GM12878 (cell line): ENCODE measurements at regions of chr17 and their contacts with region 1.

Region 1: DNA sequence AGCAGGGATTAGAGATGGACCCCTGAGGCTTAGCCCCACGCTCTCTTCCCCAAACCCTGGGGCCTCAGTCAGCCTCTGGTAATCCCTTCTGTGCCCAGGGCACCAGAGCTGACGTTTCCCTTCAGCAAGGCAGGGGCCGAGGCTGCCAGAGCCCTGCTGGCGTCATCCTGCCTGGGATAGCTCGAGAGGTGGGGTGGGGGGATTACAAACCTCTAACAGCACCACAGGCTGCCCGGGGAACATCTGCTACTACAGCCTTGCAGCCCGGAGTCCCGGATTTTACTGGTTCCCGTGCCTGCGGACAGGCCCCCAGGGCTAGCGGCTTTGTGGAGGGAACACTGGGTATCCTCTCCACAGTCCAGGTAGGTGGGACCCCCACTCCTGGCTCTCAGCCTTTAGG is at the start of gene AANAT:
- DNase-seq: no peak
- ATAC-seq: no peak
- H3K4me3 ChIP-seq: no peak within 1 kb of the TSS
- H3K27ac ChIP-seq: no peak within 1 kb of the TSS
- H3K4me1 ChIP-seq: peaks cover 6% of the 10 kb centered on the region
- H3K27me3 ChIP-seq: no peaks in the 10 kb centered on the region
- CTCF ChIP-seq: no peak
- EP300 ChIP-seq: no peak
- POLR2A ChIP-seq: no peak
- RAD21 ChIP-seq: no peak
- polyA plus RNA-seq, gene AANAT: not detected

Region 2: GRCh38 chr17:76481071-76481655 is 13.8 kb after region 1 on chr17:
- CTCF ChIA-PET with region 1: interaction called, 18 read pairs
- POLR2A ChIA-PET with region 1: no interaction called
- RAD21 ChIA-PET with region 1: interaction called, 6 read pairs
- SMC1A ChIA-PET with region 1: interaction called, 4 read pairs
- in situ Hi-C with region 1: no loop called
- intact Hi-C with region 1: no loop called
- DNase-seq: peak; percentile 71
- ATAC-seq: peak; percentile 82
- H3K4me3 ChIP-seq: peak overlapping the region; percentile 66
- H3K27ac ChIP-seq: peak overlapping the region; percentile 99
- H3K4me1 ChIP-seq: peaks cover 53% of the 10 kb centered on the region
- H3K27me3 ChIP-seq: no peaks in the 10 kb centered on the region
- CTCF ChIP-seq: no peak
- EP300 ChIP-seq: peak; percentile 69 to 74
- POLR2A ChIP-seq: peak; percentile 67
- RAD21 ChIP-seq: no peak

Region 3: DNA sequence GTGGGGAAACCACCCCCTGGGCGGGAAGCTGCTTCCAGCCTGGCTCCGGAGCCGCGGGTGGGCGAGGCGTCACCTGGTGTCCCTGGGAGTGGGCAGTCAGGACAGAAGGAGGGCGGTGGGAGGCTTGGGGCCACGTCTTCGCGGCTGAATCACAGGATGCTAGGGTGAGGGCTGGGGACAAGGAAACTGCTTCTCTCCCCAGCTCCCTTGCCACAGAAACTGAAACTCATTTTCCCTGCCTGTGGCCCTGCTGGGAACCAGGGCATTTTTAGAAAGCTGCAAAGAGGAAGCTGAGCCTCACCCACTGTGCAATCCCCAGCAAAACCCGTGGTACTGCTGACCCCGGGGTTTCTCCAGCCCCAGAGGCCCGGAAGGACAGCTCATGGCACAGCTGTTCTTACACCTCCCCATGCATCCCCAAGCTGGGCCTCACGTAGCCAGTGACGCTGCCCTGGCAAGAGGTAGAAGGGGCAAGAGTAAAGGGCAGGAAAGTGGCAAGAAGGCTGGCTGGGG is 25.7 kb after region 1 on chr17:
- CTCF ChIA-PET with region 1: interaction called, 15 read pairs
- POLR2A ChIA-PET with region 1: no interaction called
- RAD21 ChIA-PET with region 1: interaction called, 19 read pairs
- SMC1A ChIA-PET with region 1: interaction called, 19 read pairs
- in situ Hi-C with region 1: no loop called
- intact Hi-C with region 1: no loop called
- DNase-seq: peak; percentile 80
- ATAC-seq: peak; percentile 79
- H3K4me3 ChIP-seq: peak overlapping the region; percentile 47; the same call in 1 of the 2 replicates
- H3K27ac ChIP-seq: peak overlapping the region; percentile 80
- H3K4me1 ChIP-seq: peaks cover 67% of the 10 kb centered on the region
- H3K27me3 ChIP-seq: no peaks in the 10 kb centered on the region
- CTCF ChIP-seq: no peak
- EP300 ChIP-seq: no peak; a peak in 1 of 4 replicates
- POLR2A ChIP-seq: peak; percentile 7; the same call in 1 of the 2 replicates
- RAD21 ChIP-seq: no peak

Region 4: GRCh38 chr17:76501018-76501826 is 33.9 kb after region 1 on chr17 and contains the start of gene RHBDF2:
- CTCF ChIA-PET with region 1: interaction called, 186 read pairs
- POLR2A ChIA-PET with region 1: interaction called, 9 read pairs
- RAD21 ChIA-PET with region 1: interaction called, 37 read pairs
- SMC1A ChIA-PET with region 1: interaction called, 35 read pairs
- in situ Hi-C with region 1: loop called (anchors 5 kb)
- intact Hi-C with region 1: loop called (anchors 1 kb)
- DNase-seq: peak; percentile 62
- ATAC-seq: peak; percentile 83
- H3K4me3 ChIP-seq: peak within 1 kb of the TSS; percentile 96
- H3K27ac ChIP-seq: peak within 1 kb of the TSS; percentile 86
- H3K4me1 ChIP-seq: peaks cover 41% of the 10 kb centered on the region
- H3K27me3 ChIP-seq: no peaks in the 10 kb centered on the region
- CTCF ChIP-seq: no peak
- EP300 ChIP-seq: no peak
- POLR2A ChIP-seq: peak; percentile 85
- RAD21 ChIP-seq: no peak
- polyA plus RNA-seq, gene RHBDF2: 0.97 to 1.1 TPM

Region 5: GRCh38 chr17:76506408-76507349 is 39.3 kb after region 1 on chr17:
- CTCF ChIA-PET with region 1: interaction called, 186 read pairs
- POLR2A ChIA-PET with region 1: interaction called, 5 read pairs
- RAD21 ChIA-PET with region 1: interaction called, 37 read pairs
- SMC1A ChIA-PET with region 1: interaction called, 35 read pairs
- in situ Hi-C with region 1: loop called (anchors 5 kb)
- intact Hi-C with region 1: loop called (anchors 1 kb)
- DNase-seq: peak; percentile 40
- ATAC-seq: peak; percentile 92
- H3K4me3 ChIP-seq: no peak overlapping the region
- H3K27ac ChIP-seq: no peak overlapping the region
- H3K4me1 ChIP-seq: peaks cover 9% of the 10 kb centered on the region
- H3K27me3 ChIP-seq: no peaks in the 10 kb centered on the region; a peak in 1 of 4 replicates
- CTCF ChIP-seq: peak; percentile 89 to 99 (median 92); a peak in 5 of 6 replicates
- EP300 ChIP-seq: no peak
- POLR2A ChIP-seq: no peak
- RAD21 ChIP-seq: peak; percentile 97

Region 6: DNA sequence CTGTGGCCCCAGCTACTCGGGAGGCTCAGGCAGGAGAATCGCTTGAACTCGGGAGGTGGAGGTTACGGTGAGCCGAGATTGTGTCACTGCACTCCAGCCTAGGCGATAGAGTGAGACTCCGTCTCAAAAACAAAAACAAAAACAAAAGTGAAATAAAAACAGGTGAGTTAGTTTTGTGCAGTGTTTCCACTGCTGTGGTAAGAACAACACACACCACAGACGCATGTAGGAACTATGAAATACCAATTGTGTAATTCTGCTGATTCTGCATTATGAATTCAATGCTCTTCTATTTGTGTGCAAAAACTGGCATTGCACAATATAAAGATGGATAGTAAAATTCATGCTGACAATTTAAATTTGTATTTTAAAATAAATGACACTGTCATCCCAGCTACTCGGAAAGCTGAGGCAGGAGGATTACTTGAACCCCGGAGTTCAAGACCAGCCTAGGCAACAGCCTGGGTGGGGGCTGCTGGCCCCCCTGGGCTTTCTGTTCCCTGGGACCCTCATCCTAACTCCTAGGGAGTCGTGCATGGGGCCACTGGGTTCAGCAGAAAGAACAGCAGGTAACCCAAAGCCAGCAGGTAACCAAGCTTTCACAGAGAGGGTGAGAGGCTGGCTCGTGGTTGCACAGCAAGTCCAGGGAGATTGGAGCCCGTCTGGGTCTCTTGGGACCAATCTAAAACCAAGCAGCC is 44.5 kb after region 1 on chr17:
- CTCF ChIA-PET with region 1: interaction called, 186 read pairs
- POLR2A ChIA-PET with region 1: no interaction called
- RAD21 ChIA-PET with region 1: interaction called, 37 read pairs
- SMC1A ChIA-PET with region 1: interaction called, 35 read pairs
- in situ Hi-C with region 1: loop called (anchors 5 kb)
- intact Hi-C with region 1: no loop called
- DNase-seq: no peak
- ATAC-seq: no peak
- H3K4me3 ChIP-seq: no peak overlapping the region
- H3K27ac ChIP-seq: no peak overlapping the region
- H3K4me1 ChIP-seq: peaks cover 18% of the 10 kb centered on the region
- H3K27me3 ChIP-seq: no peaks in the 10 kb centered on the region; a peak in 1 of 4 replicates
- CTCF ChIP-seq: no peak
- EP300 ChIP-seq: no peak
- POLR2A ChIP-seq: no peak
- RAD21 ChIP-seq: no peak

Region 7: DNA sequence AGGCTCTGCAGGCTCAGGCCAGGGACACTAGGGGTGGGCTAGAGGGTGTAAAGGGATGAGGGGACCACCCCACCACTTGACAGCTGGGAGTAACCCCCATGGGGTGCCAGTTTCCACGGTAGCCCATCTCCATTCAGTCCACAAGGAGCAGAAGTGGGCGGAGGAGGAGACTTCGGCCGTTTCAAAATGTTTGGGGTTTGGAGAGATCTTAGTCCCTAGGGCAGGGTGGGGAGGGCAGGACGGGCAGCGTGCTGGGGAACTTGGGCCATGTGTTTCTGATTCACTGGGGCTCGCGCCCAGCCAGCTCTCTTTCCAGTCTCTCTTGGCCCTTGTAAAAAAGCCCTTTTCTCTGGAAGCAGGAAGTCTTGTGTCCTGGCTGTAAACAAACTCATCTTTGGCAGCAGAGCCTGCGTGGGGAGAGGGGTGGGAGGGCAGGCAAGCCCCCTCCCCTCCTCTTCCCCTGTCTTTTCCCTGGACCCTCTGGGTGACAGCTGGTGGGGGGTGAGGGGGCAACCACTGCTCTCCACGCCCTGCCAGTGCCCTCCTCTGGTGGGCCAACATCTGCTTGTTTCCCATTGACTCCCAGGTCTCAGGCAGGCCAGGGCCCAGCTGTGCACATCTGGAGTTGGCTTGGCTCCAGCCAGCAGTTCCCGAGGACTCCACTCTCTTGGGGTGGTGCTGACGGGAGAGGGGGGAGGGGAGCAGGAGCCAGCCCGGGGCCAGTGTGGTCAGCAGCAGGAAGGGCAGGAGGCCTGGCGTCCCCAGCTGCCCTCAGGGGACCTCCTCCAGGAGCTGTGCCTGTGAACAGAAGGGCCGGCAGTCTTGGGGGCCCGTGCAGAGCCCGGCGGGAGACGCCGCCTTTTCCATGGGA is 62.1 kb after region 1 on chr17:
- CTCF ChIA-PET with region 1: no interaction called
- POLR2A ChIA-PET with region 1: no interaction called
- RAD21 ChIA-PET with region 1: no interaction called
- SMC1A ChIA-PET with region 1: no interaction called
- in situ Hi-C with region 1: no loop called
- intact Hi-C with region 1: no loop called
- DNase-seq: no peak
- ATAC-seq: peak; percentile 4; the same call in 2 of the 3 replicates
- H3K4me3 ChIP-seq: peak overlapping the region; percentile 27; the same call in 1 of the 2 replicates
- H3K27ac ChIP-seq: no peak overlapping the region
- H3K4me1 ChIP-seq: peaks cover 12% of the 10 kb centered on the region
- H3K27me3 ChIP-seq: no peaks in the 10 kb centered on the region
- CTCF ChIP-seq: no peak
- EP300 ChIP-seq: no peak
- POLR2A ChIP-seq: no peak
- RAD21 ChIP-seq: no peak